Endothelial cell of umbilical vein (primary cell): ENCODE measurements at regions of chr13 and their contacts with region 1.

Region 1: DNA sequence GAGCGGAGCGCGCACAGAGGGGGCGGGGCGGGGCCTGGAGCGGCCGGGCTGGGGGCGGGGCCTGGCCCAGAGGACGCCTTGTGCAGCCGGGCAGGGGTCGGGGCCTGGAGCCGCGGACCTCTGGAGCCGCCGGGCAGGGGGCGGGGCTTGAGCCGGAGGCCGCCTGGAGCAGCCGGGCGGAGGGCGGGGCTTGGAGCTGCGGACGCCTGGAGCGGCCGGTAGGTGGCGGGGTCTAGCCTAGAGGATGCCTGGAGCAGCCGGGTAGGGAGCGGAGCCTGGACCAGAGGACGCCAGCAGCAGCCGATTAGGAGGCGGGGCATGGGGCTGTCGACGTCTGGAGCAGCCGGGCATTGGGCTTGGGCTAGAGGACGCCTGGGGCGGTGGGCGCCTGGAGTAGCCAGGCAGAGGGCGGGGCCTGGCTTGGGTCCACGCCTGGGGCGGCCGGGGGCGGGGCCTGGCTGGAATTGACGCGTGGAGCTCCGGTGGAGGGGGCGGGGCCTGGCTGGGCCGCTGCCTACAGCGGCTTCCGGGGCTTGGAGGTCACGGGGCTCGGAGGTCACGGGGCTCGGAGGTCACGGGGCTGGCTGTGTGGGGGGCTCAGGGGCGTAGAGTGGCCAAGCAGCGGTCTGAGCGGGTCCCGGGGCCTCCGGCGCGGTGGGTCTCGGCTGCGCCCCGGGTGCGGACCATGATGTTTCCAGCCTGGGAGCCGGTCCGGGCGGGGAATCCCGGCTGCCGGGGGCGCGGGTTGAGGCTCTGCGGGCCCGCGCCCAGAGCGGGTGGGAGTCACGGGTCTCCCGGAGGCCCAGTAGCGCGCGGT is at the start of gene ANKRD10:
- DNase-seq: peak; percentile 100
- H3K4me3 ChIP-seq: peak within 1 kb of the TSS; percentile 75 to 99 (median 87)
- H3K27ac ChIP-seq: peak within 1 kb of the TSS; percentile 75
- H3K4me1 ChIP-seq: peaks cover 20% of the 10 kb centered on the region
- H3K27me3 ChIP-seq: no peaks in the 10 kb centered on the region
- CTCF ChIP-seq: peak; percentile 86 to 90
- POLR2A ChIP-seq: peak; percentile 46
- total RNA-seq, gene ANKRD10: 83.1 and 94.1 TPM in 2 replicates

Region 2: DNA sequence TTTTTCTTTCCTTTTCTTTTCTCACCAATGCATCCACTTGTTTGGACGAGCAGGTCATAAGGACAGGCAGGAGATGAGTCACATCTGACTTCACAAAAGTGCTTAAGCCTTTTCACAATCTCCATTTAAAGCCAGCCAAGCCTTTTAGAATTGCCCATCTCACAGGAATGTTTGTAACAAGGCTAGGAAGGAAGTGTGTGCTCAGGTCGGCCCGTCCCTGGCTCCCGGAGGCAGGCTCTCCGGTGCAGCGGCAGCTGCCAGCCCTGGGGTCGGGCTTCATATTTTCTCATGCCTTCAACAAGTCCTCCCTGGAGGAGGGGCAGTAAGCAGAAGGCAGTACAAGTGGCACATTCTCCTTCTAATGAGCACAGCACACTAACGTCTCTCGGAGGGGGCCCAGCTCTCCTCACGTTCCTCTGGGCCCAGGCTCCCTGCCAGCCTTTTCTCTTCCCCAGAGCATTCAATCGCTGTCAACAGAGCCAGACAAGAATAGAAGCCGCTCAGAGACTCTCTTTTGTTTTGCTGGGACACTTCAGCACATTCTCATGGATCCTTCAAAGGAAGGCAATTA is 788.8 kb before region 1 on chr13:
- CTCF ChIA-PET with region 1: no interaction called
- POLR2A ChIA-PET with region 1: no interaction called
- dilution Hi-C with region 1: no loop called
- intact Hi-C with region 1: loop called (anchors 2 kb)
- DNase-seq: peak; percentile 98
- H3K4me3 ChIP-seq: peak overlapping the region in 1 of 3 experiments; percentile 9
- H3K27ac ChIP-seq: peak overlapping the region; percentile 92
- H3K4me1 ChIP-seq: peaks cover 50% of the 10 kb centered on the region
- H3K27me3 ChIP-seq: no peaks in the 10 kb centered on the region
- CTCF ChIP-seq: no peak
- POLR2A ChIP-seq: peak; percentile 43

Region 3: DNA sequence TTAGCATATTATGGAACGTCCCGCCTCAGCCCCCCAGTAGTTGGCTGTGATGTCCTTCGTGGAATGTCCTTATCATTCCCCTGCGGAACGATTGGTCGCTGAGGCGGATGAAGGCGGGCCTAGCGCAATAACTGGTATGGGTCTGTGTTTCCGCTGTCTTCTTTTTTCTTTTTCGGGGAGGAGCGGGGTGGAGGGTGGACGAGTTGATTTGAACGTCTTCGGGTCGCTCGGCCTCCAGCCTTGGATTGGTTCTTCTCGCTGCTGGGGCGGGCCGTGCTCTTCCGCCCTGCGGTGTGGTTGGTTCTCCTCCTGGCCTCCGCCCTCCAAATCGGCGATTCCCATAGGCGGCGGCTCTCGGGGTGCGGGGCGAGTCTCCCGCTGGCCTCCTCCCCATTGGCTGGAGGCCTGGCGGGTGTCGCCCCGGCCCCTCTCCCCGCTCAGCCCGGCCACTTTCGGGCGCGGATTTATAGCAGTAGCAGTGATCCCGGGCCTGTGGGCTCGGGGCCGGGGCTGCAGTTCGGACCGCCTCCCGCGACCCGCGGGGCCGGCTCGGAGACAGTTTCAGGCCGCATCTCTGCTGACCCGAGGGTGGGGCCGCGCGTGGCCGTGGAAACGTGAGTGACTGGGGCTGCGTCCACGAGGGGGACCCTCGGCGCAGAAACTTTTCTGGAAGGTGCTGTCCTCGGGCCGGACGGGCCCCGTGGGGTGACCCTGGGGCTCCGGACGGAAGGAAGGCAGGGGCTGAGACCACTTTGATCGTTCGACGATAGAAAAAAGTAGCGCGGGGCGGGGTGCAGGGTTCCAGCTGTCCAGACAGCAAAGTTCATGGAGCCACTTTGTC is 199.7 kb before region 1 on chr13:
- CTCF ChIA-PET with region 1: no interaction called
- POLR2A ChIA-PET with region 1: interaction called, 15 read pairs
- dilution Hi-C with region 1: no loop called
- intact Hi-C with region 1: loop called (anchors 1 kb)
- DNase-seq: peak; percentile 100
- H3K4me3 ChIP-seq: peak overlapping the region; percentile 85 to 89 (median 87)
- H3K27ac ChIP-seq: peak overlapping the region; percentile 45
- H3K4me1 ChIP-seq: peaks cover 18% of the 10 kb centered on the region
- H3K27me3 ChIP-seq: no peaks in the 10 kb centered on the region
- CTCF ChIP-seq: peak in 1 of 2 donors; percentile 12
- POLR2A ChIP-seq: no peak

Region 4: DNA sequence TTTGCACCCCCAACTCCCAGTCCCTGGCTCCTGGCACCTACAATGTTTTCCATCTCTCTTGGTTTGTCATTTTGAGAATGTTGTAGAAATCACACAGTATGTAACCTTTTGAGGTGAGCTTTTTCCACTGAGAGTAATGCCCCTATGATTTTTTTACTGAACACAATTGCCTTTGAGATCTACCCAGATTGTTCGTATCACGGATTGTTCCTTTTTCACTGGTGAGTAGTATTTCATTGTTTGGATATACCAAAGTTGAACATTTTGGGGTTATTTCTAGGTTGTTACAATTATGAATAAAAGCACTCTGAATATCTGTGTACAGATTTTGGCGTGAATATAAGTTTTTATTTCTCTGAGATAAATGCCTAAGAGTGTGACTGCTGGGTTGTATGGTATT is 17.3 kb after region 1 on chr13:
- CTCF ChIA-PET with region 1: no interaction called
- POLR2A ChIA-PET with region 1: no interaction called
- dilution Hi-C with region 1: no loop called
- intact Hi-C with region 1: no loop called
- DNase-seq: no peak
- H3K4me3 ChIP-seq: no peak overlapping the region
- H3K27ac ChIP-seq: no peak overlapping the region
- H3K4me1 ChIP-seq: no peaks in the 10 kb centered on the region
- H3K27me3 ChIP-seq: peaks cover 6 to 11% of the 10 kb centered on the region in 2 experiments
- CTCF ChIP-seq: no peak
- POLR2A ChIP-seq: no peak

Region 5: DNA sequence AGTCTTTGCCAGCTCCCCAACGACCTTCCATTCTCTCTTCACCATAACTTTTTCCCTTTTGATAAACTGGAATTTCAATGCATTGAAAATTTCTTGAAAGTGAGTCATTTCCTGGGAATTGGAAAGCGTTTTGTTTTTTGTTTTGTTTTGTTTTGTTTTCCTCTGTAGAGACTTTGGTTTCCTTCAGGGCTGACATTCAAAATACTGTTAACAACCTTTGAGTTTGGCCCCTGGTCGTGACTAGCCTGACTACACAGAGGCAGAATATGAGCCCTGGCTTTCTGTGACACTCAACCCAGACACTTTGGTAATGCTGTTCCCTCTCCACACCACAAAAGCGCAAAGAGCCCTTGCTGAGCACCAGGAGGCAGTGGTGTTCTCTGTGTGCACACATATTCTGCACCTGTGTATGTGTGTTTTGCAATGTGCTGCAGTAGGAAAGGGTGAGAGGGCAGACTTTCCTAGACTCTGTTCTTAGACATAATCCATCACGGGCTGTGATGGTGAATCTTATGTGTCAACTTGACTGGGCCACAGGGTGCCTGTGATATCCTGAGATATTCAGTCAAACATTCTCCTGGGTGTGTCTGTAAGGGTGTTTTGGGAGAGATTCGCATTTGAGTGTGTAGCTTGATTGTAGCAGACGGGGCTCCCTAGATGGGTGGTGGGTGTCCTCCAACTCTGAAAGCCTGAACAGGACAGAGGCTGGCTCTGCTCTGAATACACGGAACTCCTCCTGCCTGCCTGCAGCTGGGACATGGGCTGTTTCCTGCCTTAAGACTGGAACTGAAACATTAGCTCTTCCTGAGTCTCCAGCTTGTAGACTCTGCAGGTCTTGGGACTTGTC is 29.1 kb after region 1 on chr13:
- CTCF ChIA-PET with region 1: interaction called, 4 read pairs
- POLR2A ChIA-PET with region 1: no interaction called
- dilution Hi-C with region 1: no loop called
- intact Hi-C with region 1: loop called (anchors 1 kb)
- DNase-seq: peak; percentile 67
- H3K4me3 ChIP-seq: peak overlapping the region in 1 of 3 experiments; percentile 1
- H3K27ac ChIP-seq: peak overlapping the region; percentile 73
- H3K4me1 ChIP-seq: peaks cover 18% of the 10 kb centered on the region
- H3K27me3 ChIP-seq: no peaks in the 10 kb centered on the region
- CTCF ChIP-seq: peak; percentile 57 to 67
- POLR2A ChIP-seq: no peak

Region 6: DNA sequence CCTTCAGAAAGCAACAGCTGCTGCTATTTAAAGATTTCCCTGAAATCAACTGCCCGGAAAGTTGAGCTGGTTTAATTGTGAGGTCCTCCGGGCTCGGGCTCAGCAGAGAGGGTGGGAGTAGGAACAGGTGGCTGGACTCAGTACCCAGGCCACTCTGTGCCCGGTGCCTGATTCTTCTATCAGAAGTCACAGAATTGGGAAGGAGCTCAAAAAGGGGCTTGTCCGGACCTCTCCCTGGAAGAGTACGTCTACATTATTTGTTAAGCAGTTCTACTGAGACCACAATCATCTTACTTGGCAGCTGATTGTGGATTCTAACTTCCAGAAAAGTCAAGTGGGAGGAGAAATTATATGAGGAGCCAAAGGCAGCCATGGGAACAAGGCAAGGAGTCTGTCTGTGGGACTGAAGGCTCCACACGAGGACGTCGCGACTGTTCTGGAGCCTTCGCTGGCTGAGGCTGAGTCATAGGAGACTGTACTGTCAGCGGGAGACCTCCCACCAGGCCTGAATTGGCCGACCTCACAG is 91.3 kb after region 1 on chr13:
- CTCF ChIA-PET with region 1: interaction called, 7 read pairs
- POLR2A ChIA-PET with region 1: interaction called, 3 read pairs
- dilution Hi-C with region 1: no loop called
- intact Hi-C with region 1: loop called (anchors 1 kb)
- DNase-seq: peak; percentile 77
- H3K4me3 ChIP-seq: no peak overlapping the region
- H3K27ac ChIP-seq: peak overlapping the region; percentile 36
- H3K4me1 ChIP-seq: peaks cover 17% of the 10 kb centered on the region
- H3K27me3 ChIP-seq: peaks cover 0 to 7% of the 10 kb centered on the region in 2 experiments
- CTCF ChIP-seq: no peak
- POLR2A ChIP-seq: no peak

Region 7: DNA sequence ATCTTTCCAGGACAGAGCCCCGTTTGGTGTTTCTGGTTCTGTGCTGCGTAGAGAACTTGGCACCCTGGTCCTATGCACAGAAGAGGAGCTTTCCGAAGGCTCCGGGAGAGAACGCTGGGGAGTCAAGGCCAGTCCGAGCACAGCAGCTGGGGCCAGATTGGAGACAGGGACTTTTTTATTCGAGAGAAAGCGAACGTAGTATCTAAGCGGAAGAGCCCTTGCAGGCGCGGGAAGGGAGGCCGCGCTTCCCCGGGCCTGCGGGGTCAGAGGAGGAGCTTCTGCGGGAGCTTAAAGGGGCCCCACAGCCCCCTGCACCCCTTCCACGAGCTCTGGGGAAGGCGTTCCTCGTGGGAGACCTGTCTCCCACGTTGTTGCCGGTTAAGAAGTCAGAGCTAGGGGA is 151.3 kb after region 1 on chr13:
- CTCF ChIA-PET with region 1: interaction called, 18 read pairs
- POLR2A ChIA-PET with region 1: no interaction called
- dilution Hi-C with region 1: no loop called
- intact Hi-C with region 1: loop called (anchors 1 kb)
- DNase-seq: no peak
- H3K4me3 ChIP-seq: no peak overlapping the region
- H3K27ac ChIP-seq: no peak overlapping the region
- H3K4me1 ChIP-seq: peaks cover 7% of the 10 kb centered on the region
- H3K27me3 ChIP-seq: peaks cover 13 to 23% of the 10 kb centered on the region in 2 experiments
- CTCF ChIP-seq: no peak
- POLR2A ChIP-seq: no peak

Region 8: DNA sequence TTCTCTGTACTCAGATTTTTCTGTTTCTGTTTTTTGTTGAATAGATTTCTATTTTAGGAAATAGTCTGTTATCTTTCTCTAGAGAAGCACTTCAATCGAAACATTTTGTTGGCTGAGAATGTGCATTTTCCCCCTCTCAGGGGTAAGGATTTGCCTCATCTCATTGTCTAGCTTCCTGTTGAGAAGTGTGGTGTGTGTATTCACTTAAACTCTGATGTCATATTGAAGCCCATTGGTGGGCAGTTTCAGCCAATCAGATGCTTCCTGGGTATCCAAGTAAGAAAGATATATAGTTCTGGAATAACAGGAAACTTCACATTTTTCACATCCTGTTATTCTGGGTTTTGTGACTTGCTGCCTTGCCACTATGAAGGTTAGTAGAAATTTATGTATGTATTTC is 287.5 kb after region 1 on chr13:
- CTCF ChIA-PET with region 1: interaction called, 4 read pairs
- POLR2A ChIA-PET with region 1: no interaction called
- dilution Hi-C with region 1: no loop called
- intact Hi-C with region 1: loop called (anchors 1 kb)
- DNase-seq: peak; percentile 99
- H3K4me3 ChIP-seq: peak overlapping the region; percentile 65 to 97 (median 82)
- H3K27ac ChIP-seq: peak overlapping the region; percentile 100
- H3K4me1 ChIP-seq: peaks cover 28% of the 10 kb centered on the region
- H3K27me3 ChIP-seq: no peaks in the 10 kb centered on the region
- CTCF ChIP-seq: no peak
- POLR2A ChIP-seq: peak; percentile 80